Panc1 (cell line): ENCODE measurements at regions of chr1 and their contacts with region 1.

Region 1: GRCh38 chr1:75461854-75462253 is 149.1 kb downstream of the SLC44A5 start:
- DNase-seq: no peak
- ATAC-seq: no peak
- H3K4me3 ChIP-seq: no peak overlapping the region
- H3K27ac ChIP-seq: no peak overlapping the region
- H3K4me1 ChIP-seq: no peaks in the 10 kb centered on the region
- H3K27me3 ChIP-seq: no peaks in the 10 kb centered on the region
- CTCF ChIP-seq: no peak

Region 2: DNA sequence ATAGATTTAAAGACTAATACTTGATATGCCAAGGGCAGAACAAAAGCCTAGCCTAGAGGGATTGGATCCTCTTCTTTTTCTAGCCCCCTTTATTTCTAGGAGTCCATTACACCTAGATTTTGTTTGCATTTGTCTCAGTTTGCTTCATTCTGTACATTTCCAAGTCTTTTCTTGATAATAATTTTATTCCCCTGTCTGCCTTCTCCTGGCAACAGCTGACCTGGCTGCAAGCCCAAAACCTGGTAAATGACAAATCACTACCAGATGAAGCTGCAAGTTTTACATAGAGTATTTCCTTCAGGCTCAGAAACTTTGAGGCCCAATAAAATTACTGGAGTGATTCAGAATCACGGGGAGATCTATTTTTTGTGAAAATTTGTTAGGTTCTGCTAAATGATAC is 364.2 kb before region 1 on chr1:
- CTCF ChIA-PET with region 1: no interaction called
- POLR2A ChIA-PET with region 1: no interaction called
- in situ Hi-C with region 1: no loop called
- intact Hi-C with region 1: no loop called
- DNase-seq: no peak
- ATAC-seq: no peak
- H3K4me3 ChIP-seq: no peak overlapping the region
- H3K27ac ChIP-seq: no peak overlapping the region
- H3K4me1 ChIP-seq: no peaks in the 10 kb centered on the region
- H3K27me3 ChIP-seq: no peaks in the 10 kb centered on the region
- CTCF ChIP-seq: no peak

Region 3: GRCh38 chr1:75438355-75438754 is 23.5 kb before region 1 on chr1:
- CTCF ChIA-PET with region 1: no interaction called
- POLR2A ChIA-PET with region 1: no interaction called
- in situ Hi-C with region 1: no loop called
- intact Hi-C with region 1: loop called (anchors 2 kb)
- DNase-seq: no peak
- ATAC-seq: no peak
- H3K4me3 ChIP-seq: no peak overlapping the region
- H3K27ac ChIP-seq: no peak overlapping the region
- H3K4me1 ChIP-seq: no peaks in the 10 kb centered on the region
- H3K27me3 ChIP-seq: no peaks in the 10 kb centered on the region
- CTCF ChIP-seq: no peak

Region 4: GRCh38 chr1:75615613-75616435 is 154.0 kb after region 1 on chr1:
- CTCF ChIA-PET with region 1: interaction called, 12 read pairs
- POLR2A ChIA-PET with region 1: no interaction called
- in situ Hi-C with region 1: no loop called
- intact Hi-C with region 1: no loop called
- DNase-seq: no peak
- ATAC-seq: peak; percentile 67
- H3K4me3 ChIP-seq: peak overlapping the region; percentile 40 to 59
- H3K27ac ChIP-seq: no peak overlapping the region
- H3K4me1 ChIP-seq: peaks cover 5% of the 10 kb centered on the region; the same call in 1 of the 2 replicates
- H3K27me3 ChIP-seq: peaks cover 34% of the 10 kb centered on the region
- CTCF ChIP-seq: no peak